ENCODE measurements at regions of chr20 and their contacts with region 1.

Region 1: DNA sequence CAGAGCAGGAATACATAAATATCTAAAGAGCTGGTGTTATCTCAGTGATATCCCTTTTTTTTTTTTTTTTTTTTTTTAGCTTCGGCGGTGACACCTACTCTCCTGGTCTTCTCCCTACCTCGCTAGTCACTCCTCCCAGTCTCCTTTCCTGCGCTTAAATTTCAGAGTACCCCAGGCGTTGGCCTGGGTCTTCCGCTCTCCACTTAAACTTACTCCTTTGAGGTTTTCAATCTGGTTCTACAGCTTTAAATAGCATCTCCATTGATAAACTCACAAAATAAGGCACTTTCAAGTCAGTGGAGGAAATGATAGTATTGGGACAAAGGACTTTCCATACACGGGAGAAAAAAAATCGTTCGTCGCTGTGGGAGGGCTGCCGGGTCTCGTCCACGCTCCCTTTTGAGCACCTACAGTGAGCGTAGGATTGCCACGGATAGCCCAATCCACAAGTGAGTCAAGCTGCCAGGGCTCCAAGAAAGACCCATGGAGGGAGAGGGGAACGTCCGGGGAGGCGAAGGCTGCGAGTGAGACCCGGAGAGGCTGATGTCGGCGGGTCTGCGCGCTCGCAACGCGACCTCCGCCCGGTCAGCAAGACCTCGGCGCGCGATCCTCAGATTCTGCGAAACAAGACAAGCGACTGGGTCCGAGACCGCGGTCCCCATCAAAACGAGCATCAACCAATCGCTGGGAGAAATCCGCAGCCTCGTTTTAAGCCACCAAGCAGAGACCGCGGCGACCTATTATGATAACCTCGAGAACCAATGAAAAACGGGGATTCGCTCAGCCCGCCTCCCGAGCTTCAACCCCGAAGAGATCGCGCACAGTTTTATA is 672 bp upstream of the SRSF6 start:
- DNase-seq: peak; percentile 83 to 86 (median 83)
- H3K4me3 ChIP-seq: peak overlapping the region; percentile 80 to 86 (median 81)
- H3K4me3 Mint-ChIP-seq: peak overlapping the region; percentile 93 to 96
- H3K27ac ChIP-seq: peak overlapping the region; percentile 93 to 99
- H3K27ac Mint-ChIP-seq: peak overlapping the region; percentile 98 to 99 (median 99)
- H3K4me1 ChIP-seq: peaks cover 13 to 19% of the 10 kb centered on the region in 2 donors
- H3K4me1 Mint-ChIP-seq: peaks cover 23% of the 10 kb centered on the region
- H3K27me3 ChIP-seq: no peaks in the 10 kb centered on the region
- H3K27me3 Mint-ChIP-seq: peaks cover 9 to 15% (median 9%) of the 10 kb centered on the region in 3 donors
- CTCF ChIP-seq: no peak

Region 2: GRCh38 chr20:43032459-43032858 is 424.6 kb before region 1 on chr20:
- intact Hi-C with region 1: no loop called
- DNase-seq: no peak
- H3K4me3 ChIP-seq: no peak overlapping the region
- H3K4me3 Mint-ChIP-seq: no peak overlapping the region
- H3K27ac ChIP-seq: no peak overlapping the region
- H3K27ac Mint-ChIP-seq: no peak overlapping the region
- H3K4me1 ChIP-seq: no peaks in the 10 kb centered on the region
- H3K4me1 Mint-ChIP-seq: no peaks in the 10 kb centered on the region
- H3K27me3 ChIP-seq: no peaks in the 10 kb centered on the region
- H3K27me3 Mint-ChIP-seq: peaks cover 0 to 1% (median 1%) of the 10 kb centered on the region in 3 donors
- CTCF ChIP-seq: no peak

Region 3: DNA sequence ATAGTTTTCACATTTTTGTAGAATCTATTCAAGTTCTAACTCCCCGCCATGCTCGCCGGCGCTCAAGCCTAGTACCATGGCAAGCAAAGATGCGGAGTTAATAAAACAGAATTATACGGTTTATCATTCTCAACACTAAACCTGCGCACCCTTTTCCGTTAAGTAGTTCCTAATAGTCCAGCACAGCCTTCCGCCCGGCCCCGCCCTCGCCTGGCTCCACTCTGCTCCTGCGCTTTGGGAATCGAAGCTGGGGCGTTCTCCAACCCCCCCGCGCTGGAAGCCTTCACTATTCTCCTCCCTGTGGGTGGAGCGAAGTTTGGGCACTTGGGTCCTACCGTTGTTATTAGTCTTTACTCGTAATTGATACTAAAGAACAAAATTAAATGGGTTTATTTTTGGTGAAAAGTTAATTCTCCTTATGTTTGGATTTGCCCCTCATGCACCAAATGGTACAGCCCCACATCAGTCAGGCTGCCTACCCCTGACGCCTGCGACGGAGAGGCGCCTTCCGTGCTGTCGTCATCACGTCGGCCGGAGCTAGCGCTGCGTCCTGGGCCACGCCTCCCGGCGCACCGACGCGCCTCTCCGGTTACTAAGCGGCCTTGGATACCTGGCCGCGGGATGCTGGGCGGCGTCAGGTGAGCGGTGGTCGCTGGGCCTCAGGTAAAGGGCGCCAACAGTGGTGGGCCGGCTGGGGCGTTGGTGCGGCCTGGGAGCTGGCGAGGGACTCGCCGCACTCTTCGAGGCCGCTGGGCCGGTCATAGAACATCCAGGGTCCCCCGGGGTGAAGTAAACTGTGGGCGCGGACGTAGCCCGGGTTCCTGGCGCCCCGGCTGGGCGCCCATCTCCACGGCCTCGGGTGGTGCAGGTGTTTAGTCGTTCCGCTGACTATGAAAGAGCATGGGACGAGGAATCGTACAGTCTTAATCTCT is 133.6 kb after region 1 on chr20 and contains the start of gene IFT52:
- intact Hi-C with region 1: loop called (anchors 5 kb)
- DNase-seq: peak; percentile 85 to 90 (median 86)
- H3K4me3 ChIP-seq: peak within 1 kb of the TSS; percentile 82 to 86 (median 85)
- H3K4me3 Mint-ChIP-seq: peak within 1 kb of the TSS; percentile 85 to 93
- H3K27ac ChIP-seq: peak within 1 kb of the TSS; percentile 79 to 95
- H3K27ac Mint-ChIP-seq: peak within 1 kb of the TSS; percentile 93 to 99 (median 97)
- H3K4me1 ChIP-seq: peaks cover 13 to 14% of the 10 kb centered on the region in 2 donors
- H3K4me1 Mint-ChIP-seq: peaks cover 16% of the 10 kb centered on the region
- H3K27me3 ChIP-seq: no peaks in the 10 kb centered on the region
- H3K27me3 Mint-ChIP-seq: peaks cover 0 to 4% (median 0%) of the 10 kb centered on the region in 3 donors
- CTCF ChIP-seq: no peak
- polyA plus RNA-seq, gene IFT52: 17.6 to 28.1 (median 24.1) TPM

Region 4: GRCh38 chr20:43666376-43667328 is 209.6 kb after region 1 on chr20 and contains the start of gene MYBL2:
- intact Hi-C with region 1: loop called in 1 of 2 experiments (anchors 5 kb)
- DNase-seq: peak; percentile 42 to 58 (median 55)
- H3K4me3 ChIP-seq: peak within 1 kb of the TSS; percentile 37 to 75 (median 49)
- H3K4me3 Mint-ChIP-seq: peak within 1 kb of the TSS; percentile 67 to 85
- H3K27ac ChIP-seq: no peak within 1 kb of the TSS
- H3K27ac Mint-ChIP-seq: peak within 1 kb of the TSS in 1 of 7 donors; percentile 71
- H3K4me1 ChIP-seq: peaks cover 13 to 24% of the 10 kb centered on the region in 2 donors
- H3K4me1 Mint-ChIP-seq: peaks cover 21% of the 10 kb centered on the region
- H3K27me3 ChIP-seq: peaks cover 0 to 19% of the 10 kb centered on the region in 2 donors
- H3K27me3 Mint-ChIP-seq: peaks cover 10 to 29% (median 22%) of the 10 kb centered on the region in 3 donors
- CTCF ChIP-seq: no peak
- polyA plus RNA-seq, gene MYBL2: 0.08 to 0.10 TPM in 2 of 3 donors, not detected in the other

Region 5: GRCh38 chr20:44196271-44196670 is 739.2 kb after region 1 on chr20:
- intact Hi-C with region 1: loop called in 1 of 2 experiments (anchors 10 kb)
- DNase-seq: no peak
- H3K4me3 ChIP-seq: no peak overlapping the region
- H3K4me3 Mint-ChIP-seq: no peak overlapping the region
- H3K27ac ChIP-seq: no peak overlapping the region
- H3K27ac Mint-ChIP-seq: peak overlapping the region in 1 of 7 donors; percentile 26
- H3K4me1 ChIP-seq: no peaks in the 10 kb centered on the region
- H3K4me1 Mint-ChIP-seq: no peaks in the 10 kb centered on the region
- H3K27me3 ChIP-seq: no peaks in the 10 kb centered on the region
- H3K27me3 Mint-ChIP-seq: peaks cover 1 to 6% (median 3%) of the 10 kb centered on the region in 3 donors
- CTCF ChIP-seq: no peak

Measured in CD14-positive monocyte (primary cell).